CD4-positive, alpha-beta memory T cell (primary cell): ENCODE measurements at regions of chr10 and their contacts with region 1.

Region 1: GRCh38 chr10:86965986-86966654 is 2.2 kb upstream of the ADIRF start:
- DNase-seq: no peak
- H3K4me3 ChIP-seq: peak overlapping the region in 1 of 2 donors; percentile 23
- H3K4me3 Mint-ChIP-seq: peak overlapping the region; percentile 56 to 86 (median 80)
- H3K27ac ChIP-seq: no peak overlapping the region
- H3K27ac Mint-ChIP-seq: peak overlapping the region; percentile 59 to 87 (median 86)
- H3K4me1 ChIP-seq: peaks cover 46% of the 10 kb centered on the region
- H3K4me1 Mint-ChIP-seq: peaks cover 20 to 52% (median 29%) of the 10 kb centered on the region in 4 donors
- H3K27me3 ChIP-seq: no peaks in the 10 kb centered on the region
- H3K27me3 Mint-ChIP-seq: no peaks in the 10 kb centered on the region

Region 2: GRCh38 chr10:86953747-86954680 is 12.1 kb before region 1 on chr10:
- CTCF ChIA-PET with region 1: interaction called, 14 read pairs
- POLR2A ChIA-PET with region 1: interaction called, 9 read pairs
- intact Hi-C with region 1: no loop called
- DNase-seq: no peak
- H3K4me3 ChIP-seq: no peak overlapping the region
- H3K4me3 Mint-ChIP-seq: no peak overlapping the region
- H3K27ac ChIP-seq: no peak overlapping the region
- H3K27ac Mint-ChIP-seq: peak overlapping the region in 2 of 7 donors; percentile 22 to 42
- H3K4me1 ChIP-seq: peaks cover 21% of the 10 kb centered on the region
- H3K4me1 Mint-ChIP-seq: peaks cover 10 to 24% (median 15%) of the 10 kb centered on the region in 4 donors
- H3K27me3 ChIP-seq: no peaks in the 10 kb centered on the region
- H3K27me3 Mint-ChIP-seq: no peaks in the 10 kb centered on the region